Lower leg skin (tissue), 4 donors: ENCODE measurements at regions of chr7 and their contacts with region 1.

Region 1: GRCh38 chr7:151759591-151760042 is 117.3 kb downstream of the PRKAG2 start:
- DNase-seq: peak in 1 of 2 donors; percentile 37
- H3K4me3 ChIP-seq: no peak overlapping the region
- CTCF ChIP-seq: no peak
- POLR2A ChIP-seq: no peak

Region 2: DNA sequence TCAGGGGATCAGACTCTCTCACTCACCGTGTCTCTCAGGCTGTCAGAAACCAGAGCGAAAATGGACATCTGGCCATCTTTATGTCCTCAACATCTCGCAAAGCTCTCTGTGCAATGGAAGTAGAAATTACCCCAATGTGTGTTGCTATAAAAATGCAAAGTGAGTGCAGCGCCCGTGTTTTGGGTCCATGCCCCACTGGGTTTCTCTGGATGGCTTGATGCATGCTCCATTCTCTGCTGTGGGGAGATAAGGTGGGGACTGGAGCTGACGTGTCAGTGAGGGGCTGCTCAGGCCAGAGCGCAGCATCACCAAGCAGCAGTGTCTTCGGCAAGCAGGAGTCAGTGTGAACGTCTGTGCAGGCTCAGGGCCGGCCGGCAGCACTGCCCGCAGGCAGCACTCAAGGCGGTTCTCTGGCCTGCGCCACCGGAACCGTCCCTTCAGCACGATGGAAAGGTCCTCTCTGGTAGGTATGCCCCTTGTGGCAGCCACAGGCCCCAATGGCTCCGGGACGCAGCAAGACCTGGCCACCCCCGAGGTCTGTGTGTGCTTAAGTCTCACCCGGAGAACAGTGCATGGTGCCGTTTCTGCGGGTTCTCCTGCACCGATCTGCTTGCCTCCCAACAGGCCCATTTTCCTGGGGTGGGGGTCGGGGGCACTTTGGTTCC is 380.0 kb before region 1 on chr7:
- intact Hi-C with region 1: loop called (anchors 10 kb)
- DNase-seq: no peak
- H3K4me3 ChIP-seq: no peak overlapping the region
- CTCF ChIP-seq: no peak
- POLR2A ChIP-seq: no peak

Region 3: GRCh38 chr7:151626422-151627115 is 133.0 kb before region 1 on chr7:
- intact Hi-C with region 1: loop called (anchors 10 kb)
- DNase-seq: no peak
- H3K4me3 ChIP-seq: no peak overlapping the region
- CTCF ChIP-seq: no peak
- POLR2A ChIP-seq: no peak